CD4-positive, alpha-beta T cell (primary cell): ENCODE measurements at regions of chr13 and their contacts with region 1.

Region 1: GRCh38 chr13:110561344-110562035 is at the start of gene RAB20:
- DNase-seq: peak; percentile 22 to 79 (median 51)
- ATAC-seq: peak; percentile 60
- H3K4me3 ChIP-seq: peak within 1 kb of the TSS; percentile 72
- H3K4me3 Mint-ChIP-seq: peak within 1 kb of the TSS; percentile 100
- H3K27ac ChIP-seq: peak within 1 kb of the TSS; percentile 41 to 55
- H3K27ac Mint-ChIP-seq: peak within 1 kb of the TSS; percentile 77
- H3K4me1 ChIP-seq: peaks cover 17% of the 10 kb centered on the region
- H3K4me1 Mint-ChIP-seq: peaks cover 50% of the 10 kb centered on the region
- H3K27me3 ChIP-seq: no peaks in the 10 kb centered on the region
- H3K27me3 Mint-ChIP-seq: no peaks in the 10 kb centered on the region
- CTCF ChIP-seq: no peak
- total RNA-seq, gene RAB20: 0.89 to 1.4 TPM

Region 2: GRCh38 chr13:110444226-110444653 is 117.2 kb before region 1 on chr13:
- CTCF ChIA-PET with region 1: no interaction called
- POLR2A ChIA-PET with region 1: no interaction called
- intact Hi-C with region 1: no loop called
- DNase-seq: no peak
- ATAC-seq: no peak
- H3K4me3 ChIP-seq: no peak overlapping the region
- H3K4me3 Mint-ChIP-seq: no peak overlapping the region
- H3K27ac ChIP-seq: no peak overlapping the region
- H3K27ac Mint-ChIP-seq: no peak overlapping the region
- H3K4me1 ChIP-seq: no peaks in the 10 kb centered on the region
- H3K4me1 Mint-ChIP-seq: no peaks in the 10 kb centered on the region
- H3K27me3 ChIP-seq: peaks cover 4 to 13% of the 10 kb centered on the region in 2 experiments
- H3K27me3 Mint-ChIP-seq: peaks cover 85% of the 10 kb centered on the region
- CTCF ChIP-seq: no peak

Region 3: GRCh38 chr13:110455941-110456340 is 105.5 kb before region 1 on chr13:
- CTCF ChIA-PET with region 1: no interaction called
- POLR2A ChIA-PET with region 1: no interaction called
- intact Hi-C with region 1: loop called in 1 of 2 experiments (anchors 10 kb)
- DNase-seq: peak; percentile 31 to 76 (median 47)
- ATAC-seq: peak; percentile 75
- H3K4me3 ChIP-seq: no peak overlapping the region
- H3K4me3 Mint-ChIP-seq: no peak overlapping the region
- H3K27ac ChIP-seq: no peak overlapping the region
- H3K27ac Mint-ChIP-seq: no peak overlapping the region
- H3K4me1 ChIP-seq: peaks cover 4% of the 10 kb centered on the region
- H3K4me1 Mint-ChIP-seq: peaks cover 4% of the 10 kb centered on the region
- H3K27me3 ChIP-seq: peaks cover 0 to 10% of the 10 kb centered on the region in 2 experiments
- H3K27me3 Mint-ChIP-seq: peaks cover 46% of the 10 kb centered on the region
- CTCF ChIP-seq: peak; percentile 76